PC-3 (cell line): ENCODE measurements at regions of chr12 and their contacts with region 1.

Region 1: DNA sequence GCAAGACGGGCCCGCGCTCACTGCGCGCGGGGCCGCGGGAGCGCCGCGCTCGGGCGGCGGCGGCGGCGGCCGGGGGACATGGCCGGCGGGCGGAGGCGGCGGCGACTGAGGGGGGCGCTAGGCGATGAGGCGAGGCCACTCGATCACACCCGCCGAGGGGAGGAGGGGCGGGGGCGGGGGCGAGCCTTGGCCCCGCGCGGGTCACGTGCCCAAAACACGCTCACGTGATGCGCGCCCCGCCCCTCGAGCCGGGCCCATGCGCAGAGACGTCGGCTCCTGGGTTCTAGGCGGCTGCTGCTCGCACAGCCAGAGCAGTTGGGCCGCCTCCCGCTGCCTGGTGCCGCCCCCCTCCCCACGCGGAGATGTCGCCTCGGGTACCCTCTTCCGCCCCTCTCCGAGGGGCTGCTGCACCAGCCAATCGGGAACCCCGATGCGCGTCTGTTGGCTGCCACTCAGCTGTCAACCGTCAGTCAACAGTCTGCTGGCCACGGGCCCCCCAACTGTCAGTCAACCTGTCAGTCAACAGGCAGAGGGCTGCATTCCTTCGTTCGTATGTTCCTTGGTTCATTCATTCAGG is at the start of gene SPPL3:
- DNase-seq: peak; percentile 88
- ATAC-seq: peak; percentile 73
- H3K4me3 ChIP-seq: peak within 1 kb of the TSS; percentile 94
- H3K27ac ChIP-seq: 0 out of 2 replicates have a peak within 1 kb of the TSS, but pooled peaks have one; percentile 4
- H3K4me1 ChIP-seq: peaks cover 20% of the 10 kb centered on the region
- H3K27me3 ChIP-seq: no peaks in the 10 kb centered on the region
- CTCF ChIP-seq: no peak
- total RNA-seq, gene SPPL3: 18.8 and 20.3 TPM in 2 replicates

Region 2: DNA sequence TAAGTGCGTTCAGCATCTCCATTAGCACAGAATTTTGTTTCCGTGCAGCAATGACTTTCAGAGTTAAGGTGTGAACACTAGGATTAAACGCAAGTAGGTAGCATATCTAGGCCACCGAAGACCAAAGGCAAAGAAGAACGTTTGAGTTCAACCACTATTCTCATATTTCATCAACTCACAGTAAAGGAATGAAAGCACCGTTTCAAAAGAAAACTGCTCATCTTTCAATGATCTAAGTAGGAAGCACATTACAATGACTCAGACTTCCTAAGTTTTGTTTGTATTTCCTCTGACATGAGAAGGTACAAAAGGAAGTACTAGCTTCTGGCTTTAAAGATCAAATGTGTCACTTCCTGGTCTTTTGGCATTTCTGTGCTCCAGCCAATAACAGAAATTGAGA is 121.1 kb before region 1 on chr12:
- CTCF ChIA-PET with region 1: no interaction called
- POLR2A ChIA-PET with region 1: no interaction called
- intact Hi-C with region 1: loop called (anchors 10 kb)
- DNase-seq: peak; percentile 97
- ATAC-seq: peak; percentile 95
- H3K4me3 ChIP-seq: peak overlapping the region; percentile 16; the same call in 1 of the 2 replicates
- H3K27ac ChIP-seq: peak overlapping the region; percentile 58
- H3K4me1 ChIP-seq: peaks cover 22% of the 10 kb centered on the region
- H3K27me3 ChIP-seq: no peaks in the 10 kb centered on the region
- CTCF ChIP-seq: no peak

Region 3: DNA sequence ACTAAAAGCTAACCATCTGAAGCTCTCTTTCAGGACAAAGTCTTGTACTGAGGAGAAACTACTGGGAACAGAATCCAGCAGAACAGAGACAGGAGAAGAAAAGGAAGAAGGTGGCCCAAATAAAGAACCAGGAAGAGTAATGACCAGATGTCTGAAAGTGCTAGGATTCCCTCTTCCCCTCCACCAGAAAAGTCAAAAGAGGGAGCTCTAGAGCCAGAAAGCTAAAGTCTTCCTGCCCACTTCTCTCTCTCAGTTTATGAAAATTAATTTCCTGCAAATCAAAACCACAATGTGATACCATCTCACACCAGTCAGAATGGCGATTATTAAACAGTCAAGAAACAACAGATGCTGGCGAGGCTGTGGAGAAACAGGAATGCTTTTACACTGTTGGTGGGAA is 47.3 kb before region 1 on chr12:
- CTCF ChIA-PET with region 1: no interaction called
- POLR2A ChIA-PET with region 1: interaction called, 6 read pairs
- intact Hi-C with region 1: loop called (anchors 5 kb)
- DNase-seq: peak; percentile 52
- ATAC-seq: peak; percentile 52; the same call in 1 of the 2 replicates
- H3K4me3 ChIP-seq: no peak overlapping the region
- H3K27ac ChIP-seq: no peak overlapping the region
- H3K4me1 ChIP-seq: peaks cover 26% of the 10 kb centered on the region
- H3K27me3 ChIP-seq: no peaks in the 10 kb centered on the region
- CTCF ChIP-seq: peak; percentile 71

Region 4: GRCh38 chr12:120961604-120962531 is 57.6 kb after region 1 on chr12:
- CTCF ChIA-PET with region 1: no interaction called
- POLR2A ChIA-PET with region 1: no interaction called
- intact Hi-C with region 1: no loop called
- DNase-seq: no peak
- ATAC-seq: no peak
- H3K4me3 ChIP-seq: no peak overlapping the region
- H3K27ac ChIP-seq: peak overlapping the region; percentile 80
- H3K4me1 ChIP-seq: peaks cover 26% of the 10 kb centered on the region
- H3K27me3 ChIP-seq: no peaks in the 10 kb centered on the region
- CTCF ChIP-seq: no peak